ENCODE measurements at regions of chr2 and their contacts with region 1.

Region 1: DNA sequence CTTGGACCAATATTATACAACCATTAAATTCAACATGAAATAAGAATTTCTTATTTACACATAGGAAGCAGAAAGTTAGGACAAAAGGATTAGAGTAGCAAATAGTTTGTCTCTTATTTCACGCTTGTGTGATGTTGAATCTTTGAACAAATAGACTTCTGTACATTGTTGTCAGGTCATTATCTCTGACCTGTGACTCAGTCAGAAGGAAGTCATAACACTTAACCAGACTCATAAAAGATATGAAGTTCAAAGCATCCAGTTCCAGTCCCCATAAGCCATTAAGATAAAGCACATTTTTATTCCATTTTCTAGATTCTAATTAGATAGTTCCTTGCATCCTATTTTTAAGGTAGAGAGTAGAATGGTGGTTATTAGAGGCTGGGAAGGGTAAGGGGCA is 130.8 kb downstream of the UPP2 start:
- DNase-seq: peak in 2 of 4 experiments; percentile 13 to 28
- ATAC-seq: peak; percentile 60; the same call in 2 of the 3 replicates
- H3K4me3 ChIP-seq: no peak overlapping the region
- H3K27ac ChIP-seq: no peak overlapping the region
- H3K4me1 ChIP-seq: peaks cover 7 to 8% of the 10 kb centered on the region in 2 experiments; a peak in 4 of 5 replicates
- H3K27me3 ChIP-seq: no peaks in the 10 kb centered on the region
- CTCF ChIP-seq: no peak
- EP300 ChIP-seq: peak; percentile 35; the same call in 1 of the 2 replicates
- POLR2A ChIP-seq: no peak
- RAD21 ChIP-seq: no peak

Region 2: DNA sequence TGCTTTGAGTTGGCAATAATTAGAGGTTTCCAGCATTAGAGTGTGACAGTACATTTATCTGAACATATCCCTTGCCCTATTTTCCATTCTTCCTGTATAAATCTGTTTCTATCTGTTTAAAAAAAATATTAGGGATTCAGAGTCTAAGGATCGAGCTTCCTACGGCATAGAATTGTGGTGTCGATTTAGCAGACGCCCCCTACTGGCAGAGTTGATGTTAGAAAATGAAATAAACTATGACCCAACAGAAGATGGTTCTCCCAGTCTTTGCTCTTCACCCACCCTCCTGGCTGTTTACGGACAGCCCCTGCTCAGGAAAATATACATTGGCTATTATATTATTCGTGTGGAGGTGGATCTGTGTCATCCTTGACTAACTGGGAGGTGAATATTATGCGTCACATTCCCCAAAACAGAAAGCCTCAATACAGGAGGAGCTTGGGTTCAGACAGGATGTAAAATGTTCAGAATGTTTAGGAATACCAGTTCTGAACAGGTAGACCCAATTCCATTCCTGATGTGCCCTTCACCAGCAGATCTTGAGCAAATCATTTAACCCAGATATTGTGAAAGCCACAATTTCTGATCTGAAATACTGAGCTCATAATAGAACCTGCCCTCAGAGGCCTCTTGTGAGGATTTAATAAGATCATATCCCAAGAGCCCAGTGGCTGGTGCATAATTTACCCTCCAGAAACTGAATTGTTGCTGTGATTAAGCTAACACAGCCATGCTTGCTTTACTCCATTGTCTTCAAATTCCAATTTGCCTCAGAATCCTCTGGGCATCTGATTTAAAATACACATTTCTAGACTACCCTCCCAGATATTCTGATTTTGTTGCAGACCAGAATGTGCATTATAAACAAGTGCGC is 896.1 kb before region 1 on chr2:
- CTCF ChIA-PET with region 1: no interaction called
- POLR2A ChIA-PET with region 1: no interaction called
- in situ Hi-C with region 1: no loop called
- intact Hi-C with region 1: no loop called
- DNase-seq: peak; percentile 53 to 77 (median 68)
- ATAC-seq: peak; percentile 90
- H3K4me3 ChIP-seq: no peak overlapping the region
- H3K27ac ChIP-seq: no peak overlapping the region
- H3K4me1 ChIP-seq: no peaks in the 10 kb centered on the region
- H3K27me3 ChIP-seq: 0 out of 5 replicates have a peak, but pooled peaks cover 0 to 3% of the 10 kb centered on the region in 2 experiments
- CTCF ChIP-seq: peak; percentile 58 to 79 (median 74); a peak in 5 of 6 replicates
- EP300 ChIP-seq: no peak
- POLR2A ChIP-seq: no peak
- RAD21 ChIP-seq: peak; percentile 38 to 60; a peak in 3 of 4 replicates

Region 3: DNA sequence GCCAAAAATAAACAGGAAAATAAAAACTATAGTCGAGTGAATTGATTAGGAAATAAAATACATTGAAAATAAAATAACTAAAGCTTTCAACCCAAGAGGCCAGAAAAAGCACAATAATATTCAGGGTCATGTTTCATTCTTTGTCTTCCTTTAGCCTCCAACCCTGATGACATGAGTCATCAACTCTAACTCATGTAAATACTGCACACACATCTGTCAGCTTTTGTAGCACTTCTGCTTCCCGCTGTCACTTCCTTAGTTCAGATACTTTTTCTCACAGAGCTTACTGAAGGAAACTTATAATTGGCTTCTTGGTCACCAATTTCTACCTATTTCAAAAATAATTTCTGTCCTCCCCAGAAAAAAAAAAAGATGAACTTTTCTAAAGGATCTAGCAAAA is 18.0 kb before region 1 on chr2:
- CTCF ChIA-PET with region 1: no interaction called
- POLR2A ChIA-PET with region 1: interaction called, 11 read pairs
- in situ Hi-C with region 1: no loop called
- intact Hi-C with region 1: no loop called
- DNase-seq: peak; percentile 18 to 85 (median 29)
- ATAC-seq: peak; percentile 95
- H3K4me3 ChIP-seq: no peak overlapping the region
- H3K27ac ChIP-seq: peak overlapping the region; percentile 62
- H3K4me1 ChIP-seq: peaks cover 0 to 15% of the 10 kb centered on the region in 2 experiments; a peak in 3 of 5 replicates
- H3K27me3 ChIP-seq: no peaks in the 10 kb centered on the region
- CTCF ChIP-seq: no peak
- EP300 ChIP-seq: peak; percentile 61; the same call in 1 of the 2 replicates
- POLR2A ChIP-seq: no peak
- RAD21 ChIP-seq: no peak; a peak in 1 of 4 replicates